Common myeloid progenitor, CD34-positive (primary cell): ENCODE measurements at regions of chr5 and their contacts with region 1.

Region 1: GRCh38 chr5:40688127-40688761 is 8.5 kb downstream of the PTGER4 start:
- DNase-seq: peak; percentile 90 to 96 (median 94)
- H3K4me3 ChIP-seq: peak overlapping the region in 2 of 7 experiments; percentile 0 to 42
- H3K27ac ChIP-seq: no peak overlapping the region
- H3K4me1 ChIP-seq: peaks cover 26 to 67% (median 36%) of the 10 kb centered on the region in 4 experiments
- H3K27me3 ChIP-seq: no peaks in the 10 kb centered on the region

Region 2: DNA sequence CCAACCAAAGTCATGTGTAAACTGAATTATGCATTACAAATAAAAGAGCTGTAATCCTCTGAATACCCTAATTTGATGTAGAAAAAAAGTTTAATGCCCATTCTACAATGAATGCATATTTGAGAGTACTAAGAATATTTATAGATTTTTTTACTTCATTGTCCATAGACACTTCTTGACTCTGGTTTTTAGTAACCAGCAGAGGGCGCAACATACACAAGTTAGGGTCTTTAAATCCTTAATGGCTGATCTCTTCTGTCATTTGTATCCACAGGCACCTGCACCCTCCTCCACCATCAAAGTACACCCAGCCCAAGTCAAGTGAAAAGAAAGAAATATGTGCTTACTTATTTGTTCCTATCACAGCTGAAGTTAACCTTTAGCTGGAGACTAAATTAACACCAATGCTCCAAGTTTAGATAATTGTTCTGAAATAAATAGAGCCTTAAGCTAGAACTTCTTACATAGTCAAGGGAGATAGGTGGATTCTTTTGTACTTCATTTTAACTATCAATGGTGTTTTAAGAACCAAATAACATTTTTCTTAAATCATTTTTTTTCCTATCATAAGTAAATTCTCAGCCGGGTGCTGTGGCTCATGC is 739.3 kb before region 1 on chr5:
- CTCF ChIA-PET with region 1: interaction called, 21 read pairs
- POLR2A ChIA-PET with region 1: no interaction called
- DNase-seq: peak; percentile 79 to 89 (median 86)
- H3K4me3 ChIP-seq: no peak overlapping the region
- H3K27ac ChIP-seq: no peak overlapping the region
- H3K4me1 ChIP-seq: peaks cover 0 to 5% (median 1%) of the 10 kb centered on the region in 4 experiments
- H3K27me3 ChIP-seq: no peaks in the 10 kb centered on the region

Region 3: GRCh38 chr5:40367255-40367654 is 321.0 kb before region 1 on chr5:
- CTCF ChIA-PET with region 1: interaction called, 11 read pairs
- POLR2A ChIA-PET with region 1: no interaction called
- DNase-seq: peak; percentile 32 to 62 (median 62)
- H3K4me3 ChIP-seq: no peak overlapping the region
- H3K27ac ChIP-seq: no peak overlapping the region
- H3K4me1 ChIP-seq: no peaks in the 10 kb centered on the region
- H3K27me3 ChIP-seq: no peaks in the 10 kb centered on the region